GM13977 (cell line): ENCODE measurements at regions of chr13 and their contacts with region 1.

Region 1: DNA sequence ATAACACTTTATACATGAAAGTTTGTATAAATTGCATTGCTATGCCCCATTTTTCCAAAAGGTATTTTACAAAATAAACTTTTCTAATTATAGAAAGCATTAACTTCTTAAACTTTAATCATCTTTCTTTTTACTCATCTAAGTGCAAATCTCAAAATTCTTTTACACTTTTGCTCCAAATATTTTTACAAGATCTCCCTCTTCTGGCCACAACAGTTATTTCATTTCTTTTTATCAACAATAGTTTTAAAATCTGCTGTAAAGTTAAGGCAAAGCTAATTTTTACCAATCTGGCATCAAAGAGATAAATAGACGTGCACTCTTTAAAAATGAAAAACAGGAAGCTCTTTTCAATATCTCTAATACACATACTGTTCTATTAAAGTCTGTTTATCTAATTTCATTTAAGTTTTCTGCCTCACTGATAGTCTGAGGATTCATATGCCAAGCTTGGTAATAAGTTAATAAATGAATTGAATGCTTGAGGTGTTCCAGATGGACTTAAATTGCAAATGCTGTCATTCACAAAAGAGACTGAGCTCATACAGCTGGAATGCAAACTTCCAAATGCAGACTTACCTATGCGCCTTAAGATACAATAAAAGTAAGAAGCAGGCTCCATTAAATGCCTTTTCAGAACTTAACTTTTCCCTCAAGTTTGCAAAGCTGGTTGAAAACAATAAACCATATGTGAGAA is 583.0 kb upstream of the ATXN8OS start:
- DNase-seq: no peak
- CTCF ChIP-seq: peak; percentile 9

Region 2: GRCh38 chr13:69857183-69857821 is 332.7 kb after region 1 on chr13:
- in situ Hi-C with region 1: loop called (anchors 25 kb)
- DNase-seq: peak; percentile 4
- CTCF ChIP-seq: peak; percentile 66

Region 3: GRCh38 chr13:70034286-70034685 is 509.7 kb after region 1 on chr13:
- in situ Hi-C with region 1: no loop called
- DNase-seq: no peak
- CTCF ChIP-seq: no peak